ENCODE measurements at regions of chr17 and their contacts with region 1.

Region 1: GRCh38 chr17:28812091-28812747 is 30.4 kb downstream of the FAM222B start:
- DNase-seq: peak; percentile 95
- H3K4me3 Mint-ChIP-seq: peak overlapping the region; percentile 91
- H3K27ac Mint-ChIP-seq: peak overlapping the region; percentile 97
- H3K4me1 Mint-ChIP-seq: peaks cover 43% of the 10 kb centered on the region
- H3K27me3 Mint-ChIP-seq: no peaks in the 10 kb centered on the region

Region 2: GRCh38 chr17:28460901-28461300 is 351.3 kb before region 1 on chr17:
- intact Hi-C with region 1: no loop called
- DNase-seq: no peak
- H3K4me3 Mint-ChIP-seq: no peak overlapping the region
- H3K27ac Mint-ChIP-seq: no peak overlapping the region
- H3K4me1 Mint-ChIP-seq: no peaks in the 10 kb centered on the region
- H3K27me3 Mint-ChIP-seq: peaks cover 13% of the 10 kb centered on the region

Region 3: DNA sequence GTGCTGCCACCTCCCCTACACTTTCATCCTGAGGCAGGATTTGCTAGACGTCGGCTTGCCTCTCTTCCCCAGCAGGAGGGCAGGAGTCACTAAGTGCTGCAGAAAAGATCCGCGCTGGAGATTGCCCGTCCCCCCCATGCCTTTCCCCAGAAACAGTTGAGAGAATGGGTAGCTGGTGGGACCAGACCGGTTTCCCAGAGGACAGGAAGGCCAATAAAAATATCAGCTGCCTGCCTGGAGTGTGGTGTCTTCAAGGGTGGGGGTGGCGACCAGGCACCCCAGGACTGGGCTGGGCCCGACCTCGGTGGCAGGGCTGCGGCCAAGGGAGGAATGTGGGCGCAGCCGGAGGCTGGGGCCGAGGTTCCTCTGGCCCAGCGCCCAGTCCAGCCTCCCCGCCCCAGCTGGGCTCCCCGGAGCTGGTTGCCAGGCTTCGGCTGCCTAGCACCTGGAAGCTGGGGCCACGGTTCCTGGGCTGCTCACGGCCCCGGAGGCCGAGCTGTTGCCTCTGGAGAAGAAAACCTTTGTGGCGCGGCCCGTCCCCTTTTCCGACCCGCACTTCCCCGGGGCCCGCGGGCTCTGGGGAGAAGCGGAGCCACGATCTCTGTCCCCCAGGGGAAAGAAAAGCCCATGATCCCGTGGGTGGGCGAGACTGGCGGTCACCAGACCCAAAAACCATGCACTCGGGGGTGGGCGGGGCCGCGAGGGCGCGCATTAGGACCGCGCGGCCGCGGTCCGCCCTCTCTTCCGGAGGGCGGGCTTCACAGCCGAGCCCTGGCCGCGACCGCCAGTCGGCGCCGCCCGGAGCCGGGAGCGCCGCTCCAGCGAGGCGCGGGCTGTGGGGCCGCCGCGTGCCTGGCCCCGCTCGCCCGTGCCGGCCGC is 68.8 kb before region 1 on chr17 and contains the start of gene TRAF4:
- intact Hi-C with region 1: loop called (anchors 1 kb)
- DNase-seq: peak; percentile 72
- H3K4me3 Mint-ChIP-seq: peak within 1 kb of the TSS; percentile 90
- H3K27ac Mint-ChIP-seq: peak within 1 kb of the TSS; percentile 82
- H3K4me1 Mint-ChIP-seq: peaks cover 34% of the 10 kb centered on the region
- H3K27me3 Mint-ChIP-seq: no peaks in the 10 kb centered on the region
- total RNA-seq, gene TRAF4: 178 and 182 TPM in 2 replicates

Region 4: DNA sequence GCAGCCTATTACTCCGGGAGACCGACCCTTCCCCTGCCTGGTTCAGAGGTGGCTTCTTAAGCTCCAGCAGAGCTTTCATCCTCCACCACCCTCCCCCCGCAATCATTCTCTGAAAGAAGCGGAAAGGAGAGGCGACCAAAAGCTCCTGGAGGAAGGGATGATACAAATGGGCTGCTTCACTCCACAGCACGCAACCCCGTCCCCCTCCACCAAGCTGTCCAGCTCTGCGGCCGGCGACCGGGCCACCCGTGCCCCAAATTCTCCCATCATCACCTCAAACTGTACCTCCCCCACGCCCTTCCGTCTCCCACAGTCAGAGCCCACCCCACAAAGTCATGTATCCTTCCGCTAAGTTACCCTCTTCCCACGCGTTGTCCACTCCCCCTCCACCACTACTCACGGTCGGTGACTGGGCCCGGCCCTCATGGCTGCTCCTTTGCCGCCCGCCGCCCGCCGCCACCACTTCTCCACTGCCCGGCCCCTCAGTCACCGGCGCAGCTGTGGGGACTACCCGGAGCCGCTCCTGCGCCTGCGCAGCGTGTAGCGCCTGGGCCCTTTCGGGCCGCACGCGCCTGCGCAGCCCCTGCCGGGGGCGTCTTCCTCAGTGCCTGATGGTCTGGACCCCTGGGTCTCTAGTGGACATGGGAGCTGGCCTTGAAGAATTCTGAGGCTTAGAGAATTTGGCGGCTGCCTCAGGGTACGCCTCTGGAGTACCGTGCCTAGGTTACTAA is 30.2 kb after region 1 on chr17 and contains the start of gene FAM222B:
- intact Hi-C with region 1: loop called (anchors 1 kb)
- DNase-seq: peak; percentile 85
- H3K4me3 Mint-ChIP-seq: peak within 1 kb of the TSS; percentile 97
- H3K27ac Mint-ChIP-seq: peak within 1 kb of the TSS; percentile 95
- H3K4me1 Mint-ChIP-seq: peaks cover 24% of the 10 kb centered on the region
- H3K27me3 Mint-ChIP-seq: no peaks in the 10 kb centered on the region
- total RNA-seq, gene FAM222B: 27.5 and 28.1 TPM in 2 replicates

Region 5: GRCh38 chr17:28854457-28855350 is 42.5 kb after region 1 on chr17 and contains the start of gene ERAL1:
- intact Hi-C with region 1: loop called (anchors 1 kb)
- DNase-seq: peak; percentile 82
- H3K4me3 Mint-ChIP-seq: peak within 1 kb of the TSS; percentile 85
- H3K27ac Mint-ChIP-seq: peak within 1 kb of the TSS; percentile 88
- H3K4me1 Mint-ChIP-seq: peaks cover 14% of the 10 kb centered on the region
- H3K27me3 Mint-ChIP-seq: no peaks in the 10 kb centered on the region
- total RNA-seq, gene ERAL1: 60.4 and 61.5 TPM in 2 replicates

Region 6: GRCh38 chr17:28902819-28903545 is 90.8 kb after region 1 on chr17 and contains the start of gene DHRS13:
- intact Hi-C with region 1: loop called (anchors 2 kb)
- DNase-seq: peak; percentile 93
- H3K4me3 Mint-ChIP-seq: peak within 1 kb of the TSS; percentile 91
- H3K27ac Mint-ChIP-seq: peak within 1 kb of the TSS; percentile 79
- H3K4me1 Mint-ChIP-seq: peaks cover 39% of the 10 kb centered on the region
- H3K27me3 Mint-ChIP-seq: no peaks in the 10 kb centered on the region
- total RNA-seq, gene DHRS13: 34.6 and 34.9 TPM in 2 replicates

Region 7: GRCh38 chr17:29140051-29140621 is 327.9 kb after region 1 on chr17:
- intact Hi-C with region 1: loop called (anchors 2 kb)
- DNase-seq: peak; percentile 82
- H3K4me3 Mint-ChIP-seq: peak overlapping the region; percentile 96
- H3K27ac Mint-ChIP-seq: peak overlapping the region; percentile 100
- H3K4me1 Mint-ChIP-seq: peaks cover 80% of the 10 kb centered on the region
- H3K27me3 Mint-ChIP-seq: no peaks in the 10 kb centered on the region

Measured in activated T-helper 1 cell treated with anti-CD3 and anti-CD28 coated beads, Interleukin-12 subunit alpha, Interleukin-12 subunit beta, Interleukin-2, Interleukin-4 antibody, amounts not matched to agents 30 ng/mL and 10 ng/mL and 1 ng/mL, durations not matched to agents 14 hours and 24 hours and 36 hours (primary cell).